Ascending aorta (tissue), 2 donors: ENCODE measurements at regions of chr5 and their contacts with region 1.

Region 1: GRCh38 chr5:43040287-43041098 is at the start of gene ANXA2R:
- DNase-seq: peak in 1 of 2 donors; percentile 93
- H3K4me3 ChIP-seq: peak within 1 kb of the TSS; percentile 64 to 91
- H3K27ac ChIP-seq: peak within 1 kb of the TSS; percentile 96 to 99
- H3K4me1 ChIP-seq: peaks cover 0 to 2% of the 10 kb centered on the region in 2 donors
- H3K27me3 ChIP-seq: no peaks in the 10 kb centered on the region
- CTCF ChIP-seq: peak; percentile 58 to 74 (median 66)
- total RNA-seq, gene ANXA2R: 5.1 TPM

Region 2: GRCh38 chr5:42950440-42951292 is 89.8 kb before region 1 on chr5:
- intact Hi-C with region 1: loop called (anchors 1 kb)
- DNase-seq: peak; percentile 53 to 95
- H3K4me3 ChIP-seq: peak overlapping the region; percentile 61 to 88
- H3K27ac ChIP-seq: peak overlapping the region; percentile 96 to 97
- H3K4me1 ChIP-seq: peaks cover 7% of the 10 kb centered on the region in 2 donors
- H3K27me3 ChIP-seq: no peaks in the 10 kb centered on the region
- CTCF ChIP-seq: no peak

Region 3: DNA sequence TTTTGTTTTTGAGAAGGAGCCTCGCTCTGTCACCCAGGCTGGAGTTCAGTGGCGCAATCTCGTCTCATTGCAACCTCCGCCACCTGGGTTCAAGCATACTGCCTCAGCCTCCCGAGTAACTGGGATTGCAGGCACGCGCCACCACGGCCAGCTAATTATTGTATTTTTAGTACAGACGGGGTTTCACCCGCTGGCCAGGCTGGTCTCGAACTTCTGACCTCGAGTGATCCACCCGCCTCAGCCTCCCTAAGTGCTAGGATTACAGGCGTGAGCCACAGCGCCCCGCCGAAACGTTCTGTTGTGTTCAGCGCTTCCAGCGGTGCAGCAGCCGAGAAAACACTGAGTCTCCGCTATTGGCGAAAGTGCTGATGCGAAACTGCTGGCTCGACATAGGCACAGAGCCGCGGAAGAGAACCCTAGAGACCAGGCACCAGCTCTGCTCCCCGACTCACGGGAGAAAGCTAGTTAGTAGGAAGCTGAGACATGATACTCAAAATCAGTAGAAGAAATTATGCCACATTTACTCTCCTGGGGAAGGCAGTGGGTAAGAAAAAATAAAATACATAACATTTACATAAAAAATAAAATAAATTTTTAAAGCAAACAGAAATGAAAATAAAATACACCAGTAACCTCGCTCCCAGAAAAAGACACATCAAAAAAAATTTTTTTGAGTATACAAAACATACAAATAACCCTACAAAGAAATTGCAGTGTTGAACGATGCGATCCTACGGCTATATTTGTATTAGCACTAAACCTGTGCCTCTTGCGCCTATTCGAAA is 31.9 kb before region 1 on chr5:
- intact Hi-C with region 1: loop called (anchors 5 kb)
- DNase-seq: peak in 1 of 2 donors; percentile 86
- H3K4me3 ChIP-seq: peak overlapping the region; percentile 50 to 66
- H3K27ac ChIP-seq: peak overlapping the region; percentile 81 to 83
- H3K4me1 ChIP-seq: peaks cover 0 to 4% of the 10 kb centered on the region in 2 donors
- H3K27me3 ChIP-seq: no peaks in the 10 kb centered on the region
- CTCF ChIP-seq: no peak

Region 4: DNA sequence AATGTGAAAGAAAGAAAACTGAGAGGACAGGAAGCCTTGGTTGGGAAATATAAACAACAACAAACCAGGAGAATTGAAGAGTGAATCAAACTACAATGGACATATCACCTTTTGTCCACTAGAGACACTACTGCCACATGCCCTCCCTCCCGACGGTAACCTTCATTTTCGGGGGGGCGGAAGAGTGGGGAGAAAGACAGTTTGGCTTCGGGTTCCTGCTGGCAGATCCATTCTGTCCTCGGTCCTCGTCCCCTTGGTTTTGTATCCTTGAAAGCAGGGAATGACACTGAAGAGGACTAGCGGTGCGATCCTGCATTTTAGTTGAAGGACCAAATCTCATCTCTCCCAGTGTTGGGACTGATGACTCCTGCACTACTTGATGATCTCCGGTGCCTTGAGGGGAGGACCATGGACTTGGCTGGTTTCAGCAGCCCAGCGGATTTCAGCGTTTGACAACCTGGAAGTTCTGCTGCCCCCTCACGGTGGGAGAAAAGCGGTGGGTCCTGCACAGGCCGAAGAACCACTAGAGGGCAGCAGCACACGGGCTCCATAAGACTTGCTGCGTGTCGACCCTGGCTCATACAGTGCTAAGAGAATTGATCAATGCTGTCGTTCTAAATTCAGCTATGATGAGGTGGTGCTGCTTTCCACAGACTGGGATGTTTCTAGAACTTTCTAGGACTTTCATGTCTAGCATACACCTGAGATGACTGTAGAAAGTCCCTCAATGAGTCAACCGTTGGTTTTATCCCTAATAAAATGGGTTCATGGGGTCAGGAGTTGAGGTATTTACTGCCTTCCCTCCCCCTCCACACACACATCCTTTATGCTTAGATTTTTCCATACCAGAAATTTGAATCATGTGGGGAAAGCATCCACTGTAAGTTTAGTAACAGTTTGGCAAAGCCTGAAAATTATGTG is 65.1 kb after region 1 on chr5:
- intact Hi-C with region 1: loop called (anchors 2 kb)
- DNase-seq: peak; percentile 61 to 93
- H3K4me3 ChIP-seq: peak overlapping the region; percentile 46 to 54
- H3K27ac ChIP-seq: no peak overlapping the region
- H3K4me1 ChIP-seq: no peaks in the 10 kb centered on the region
- H3K27me3 ChIP-seq: no peaks in the 10 kb centered on the region
- CTCF ChIP-seq: peak; percentile 97 to 99 (median 97)